PC-9 (cell line): ENCODE measurements at regions of chr3 and their contacts with region 1.

Region 1: DNA sequence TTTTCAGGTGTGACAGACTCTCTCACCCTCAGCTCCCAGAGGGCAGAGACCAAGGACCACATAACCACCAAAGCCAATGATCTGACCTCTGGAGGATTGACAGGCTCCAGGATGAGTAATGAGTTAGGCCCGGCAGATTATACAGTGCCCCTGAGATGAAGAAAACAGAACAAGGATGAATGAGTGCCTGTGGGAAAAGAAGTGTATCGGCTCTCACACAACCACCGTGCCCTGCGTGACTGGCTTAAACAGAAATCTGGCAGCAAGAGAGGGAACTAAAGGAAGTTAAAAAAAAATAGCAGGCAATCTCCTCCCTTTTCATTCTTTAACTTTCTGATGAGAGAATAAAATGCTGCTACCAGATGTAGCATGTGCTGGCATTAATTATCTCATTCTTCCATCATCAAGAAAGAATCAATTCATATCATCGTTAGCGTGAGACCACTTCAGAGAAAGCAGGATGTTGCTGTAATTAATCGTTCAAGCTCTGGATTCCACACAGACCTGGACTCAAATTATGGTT is 227.5 kb upstream of the COL8A1 start:
- DNase-seq: peak in 1 of 2 experiments; percentile 13
- H3K4me3 ChIP-seq: no peak overlapping the region
- H3K27ac ChIP-seq: no peak overlapping the region
- H3K4me1 ChIP-seq: no peaks in the 10 kb centered on the region
- H3K27me3 ChIP-seq: no peaks in the 10 kb centered on the region
- CTCF ChIP-seq: no peak

Region 2: DNA sequence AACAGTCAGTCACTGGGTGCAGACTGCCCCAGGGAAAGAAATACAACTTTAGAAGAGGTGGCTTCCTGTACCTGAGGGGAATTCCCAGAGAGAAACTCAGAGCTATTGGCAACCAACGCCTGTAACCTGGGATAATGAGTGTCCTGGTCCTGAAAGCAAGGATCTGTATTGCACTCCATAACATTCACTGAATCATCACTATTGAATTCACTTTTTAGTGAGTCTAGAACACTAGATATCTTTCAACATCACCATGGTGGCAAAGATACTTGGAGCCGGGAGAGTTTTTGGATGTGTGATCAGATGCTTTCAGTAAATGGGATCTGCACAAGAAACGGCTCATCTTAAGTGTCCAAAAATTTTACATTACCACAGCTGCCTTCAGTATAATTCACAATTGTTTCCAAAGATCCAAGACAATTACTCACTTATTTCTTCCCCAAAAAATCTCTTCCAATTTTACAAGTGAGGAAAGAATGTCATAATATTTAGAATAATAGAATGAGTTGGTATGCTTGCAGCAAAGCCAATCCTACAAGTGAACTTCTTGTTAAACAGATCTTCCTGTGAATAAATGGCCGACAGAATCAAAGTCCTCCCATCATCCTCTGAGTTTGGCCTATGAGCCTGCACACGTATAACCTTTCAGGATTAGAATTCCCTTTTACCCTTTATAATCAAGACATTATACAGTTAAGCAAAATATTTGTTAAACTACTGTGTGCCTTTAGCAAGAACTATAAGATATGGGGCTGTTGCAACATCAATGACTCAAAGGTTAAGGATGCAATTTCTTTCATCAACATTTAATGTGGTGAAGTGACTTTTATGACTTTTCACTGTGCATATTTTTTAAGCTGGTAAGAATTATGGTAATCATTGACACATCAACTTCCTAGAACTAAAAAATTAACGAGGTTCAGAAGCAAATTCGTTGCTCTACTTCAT is 15.7 kb before region 1 on chr3:
- CTCF ChIA-PET with region 1: no interaction called
- POLR2A ChIA-PET with region 1: no interaction called
- intact Hi-C with region 1: loop called (anchors 2 kb)
- DNase-seq: peak in 1 of 2 experiments; percentile 66
- H3K4me3 ChIP-seq: no peak overlapping the region
- H3K27ac ChIP-seq: peak overlapping the region; percentile 24; the same call in 1 of the 2 replicates
- H3K4me1 ChIP-seq: peaks cover 10% of the 10 kb centered on the region
- H3K27me3 ChIP-seq: no peaks in the 10 kb centered on the region
- CTCF ChIP-seq: no peak

Region 3: DNA sequence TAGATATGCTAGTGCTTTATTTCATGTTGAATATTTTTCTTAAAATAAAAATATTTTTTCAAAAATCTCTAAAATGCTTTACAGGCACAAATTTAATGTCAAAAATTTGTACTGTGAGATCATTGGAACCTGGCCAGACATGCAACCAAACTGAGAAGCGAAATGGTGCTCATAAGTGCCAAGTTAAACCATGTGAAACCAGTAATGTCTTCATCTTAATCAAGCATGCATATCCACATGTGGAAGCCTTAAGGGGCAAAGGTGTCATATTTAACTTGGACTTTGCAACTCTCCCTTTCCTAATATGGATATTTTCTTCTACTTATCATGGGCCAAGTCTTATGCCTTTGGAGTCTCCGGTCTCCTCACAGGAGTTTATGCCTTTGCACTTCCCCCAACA is 18.7 kb after region 1 on chr3:
- CTCF ChIA-PET with region 1: no interaction called
- POLR2A ChIA-PET with region 1: no interaction called
- intact Hi-C with region 1: no loop called
- DNase-seq: no peak
- H3K4me3 ChIP-seq: no peak overlapping the region
- H3K27ac ChIP-seq: no peak overlapping the region
- H3K4me1 ChIP-seq: no peaks in the 10 kb centered on the region
- H3K27me3 ChIP-seq: no peaks in the 10 kb centered on the region
- CTCF ChIP-seq: no peak

Region 4: DNA sequence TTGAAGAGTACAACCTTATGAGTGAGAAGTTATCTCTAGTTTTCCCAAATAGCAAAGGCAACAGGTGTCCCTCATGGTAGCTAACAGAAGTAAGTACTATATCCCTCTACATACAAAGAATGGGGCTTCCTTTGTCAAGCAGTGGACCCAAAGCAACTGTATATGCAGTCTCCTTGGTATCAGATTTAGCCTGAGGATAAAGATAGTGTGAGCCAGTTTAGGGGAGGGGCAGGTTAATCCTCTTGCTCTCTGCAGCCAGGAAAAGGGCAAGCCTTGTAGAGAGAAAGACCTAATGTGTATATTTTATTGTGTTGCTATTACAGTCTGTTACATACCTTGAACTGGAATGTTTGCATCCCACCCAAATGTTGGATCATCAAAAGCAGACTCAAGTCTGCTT is 109.7 kb after region 1 on chr3:
- CTCF ChIA-PET with region 1: no interaction called
- POLR2A ChIA-PET with region 1: no interaction called
- intact Hi-C with region 1: no loop called
- DNase-seq: no peak
- H3K4me3 ChIP-seq: no peak overlapping the region
- H3K27ac ChIP-seq: no peak overlapping the region
- H3K4me1 ChIP-seq: peaks cover 3% of the 10 kb centered on the region; the same call in 1 of the 2 replicates
- H3K27me3 ChIP-seq: no peaks in the 10 kb centered on the region
- CTCF ChIP-seq: no peak

Region 5: DNA sequence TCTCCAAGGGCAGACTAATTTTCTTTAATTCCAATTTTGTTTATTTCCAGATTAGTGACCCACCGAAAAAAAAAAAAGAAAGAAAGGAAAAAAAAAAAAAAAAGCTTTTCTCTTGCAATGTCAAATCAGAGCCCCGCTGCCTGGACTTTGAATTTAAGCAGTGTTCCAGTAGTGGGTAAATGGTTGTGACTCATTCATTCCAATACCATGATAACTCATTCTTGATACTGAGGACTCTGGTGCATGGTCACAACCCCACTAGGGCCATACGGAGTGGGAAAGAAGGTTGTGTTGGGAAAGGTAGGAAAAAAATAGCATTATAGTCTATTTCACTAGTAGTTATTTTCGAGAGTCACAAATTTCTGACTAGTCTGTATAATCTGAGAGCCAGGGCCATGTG is 168.4 kb after region 1 on chr3:
- CTCF ChIA-PET with region 1: no interaction called
- POLR2A ChIA-PET with region 1: no interaction called
- intact Hi-C with region 1: no loop called
- DNase-seq: no peak
- H3K4me3 ChIP-seq: no peak overlapping the region
- H3K27ac ChIP-seq: no peak overlapping the region
- H3K4me1 ChIP-seq: no peaks in the 10 kb centered on the region
- H3K27me3 ChIP-seq: no peaks in the 10 kb centered on the region
- CTCF ChIP-seq: no peak